ENCODE measurements at regions of chr17 and their contacts with region 1.

Region 1: DNA sequence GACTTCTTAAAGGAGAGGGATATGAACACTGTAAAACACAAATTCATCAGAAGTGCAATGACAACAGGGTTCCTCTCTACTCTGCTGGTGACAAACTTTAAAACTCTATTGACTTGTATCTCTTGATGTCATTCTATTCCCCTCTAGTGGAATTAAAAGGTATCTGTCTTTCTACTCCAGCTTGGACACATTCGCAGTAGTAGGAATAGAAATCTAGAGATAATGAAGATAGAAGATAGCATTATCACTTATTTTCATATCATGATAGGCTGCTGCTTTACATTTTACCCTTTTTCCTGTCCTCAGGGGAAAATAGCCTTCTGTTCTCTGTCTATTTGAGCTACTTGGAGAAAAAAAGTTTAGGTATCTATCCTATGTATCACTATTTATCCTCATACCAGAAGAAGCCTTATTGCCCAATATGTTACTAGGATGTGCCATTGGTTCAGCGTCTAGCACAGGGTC is 209.6 kb upstream of the CACNG5 start:
- DNase-seq: peak; percentile 67 to 85
- ATAC-seq: peak; percentile 87 to 94
- H3K4me3 ChIP-seq: no peak overlapping the region
- H3K27ac ChIP-seq: no peak overlapping the region
- H3K4me1 ChIP-seq: peaks cover 8% of the 10 kb centered on the region; the same call in 2 of the 3 replicates
- CTCF ChIP-seq: peak; percentile 91
- EP300 ChIP-seq: no peak
- POLR2A ChIP-seq: no peak
- RAD21 ChIP-seq: peak; percentile 90 to 94

Region 2: GRCh38 chr17:66610361-66611133 is 14.8 kb before region 1 on chr17:
- CTCF ChIA-PET with region 1: interaction called, 14 read pairs
- POLR2A ChIA-PET with region 1: no interaction called
- DNase-seq: no peak
- ATAC-seq: no peak
- H3K4me3 ChIP-seq: no peak overlapping the region
- H3K27ac ChIP-seq: no peak overlapping the region
- H3K4me1 ChIP-seq: no peaks in the 10 kb centered on the region
- CTCF ChIP-seq: no peak
- EP300 ChIP-seq: no peak
- POLR2A ChIP-seq: no peak
- RAD21 ChIP-seq: no peak